Endothelial cell of umbilical vein (primary cell): ENCODE measurements at regions of chr12 and their contacts with region 1.

Region 1: DNA sequence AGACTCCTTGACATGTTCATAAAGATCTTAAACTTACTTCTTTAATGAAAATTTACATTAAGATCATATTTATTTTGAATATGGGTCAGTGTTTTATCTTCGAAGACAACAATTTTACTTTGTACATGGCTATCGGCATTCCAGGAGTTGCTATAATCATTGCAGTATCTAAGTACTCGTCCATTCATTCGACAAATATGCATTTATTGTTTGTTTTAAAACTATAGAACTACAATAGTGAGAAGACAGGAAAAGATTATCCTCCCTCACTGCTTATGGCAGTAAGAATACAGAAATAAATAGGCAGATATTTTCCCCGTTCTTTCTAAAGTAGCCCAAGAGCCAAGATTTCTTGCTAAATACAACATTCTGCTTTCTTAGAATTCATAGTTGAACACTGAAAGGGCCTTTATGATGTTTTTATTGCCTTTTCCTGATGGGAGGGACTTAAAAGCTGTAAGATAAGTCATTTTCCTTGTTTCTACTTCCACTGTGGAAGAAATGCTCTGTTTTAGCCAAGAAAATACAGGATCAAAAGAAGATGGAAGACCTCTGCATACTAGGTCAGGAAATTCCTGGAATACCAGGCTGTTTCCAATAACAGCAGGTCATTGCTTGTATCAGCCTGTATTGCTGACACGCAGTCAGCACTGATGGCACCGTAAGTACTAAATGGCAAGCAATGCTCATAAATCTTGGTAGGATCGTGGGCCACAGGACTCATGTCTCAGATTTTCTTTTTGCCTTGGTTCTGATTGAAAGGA is 521.0 kb upstream of the ATP2B1 start:
- DNase-seq: peak; percentile 92
- H3K4me3 ChIP-seq: peak overlapping the region in 1 of 3 experiments; percentile 38
- H3K27ac ChIP-seq: peak overlapping the region; percentile 66
- H3K4me1 ChIP-seq: peaks cover 25% of the 10 kb centered on the region
- H3K27me3 ChIP-seq: no peaks in the 10 kb centered on the region
- CTCF ChIP-seq: no peak
- POLR2A ChIP-seq: no peak

Region 2: GRCh38 chr12:90211017-90211416 is 18.6 kb before region 1 on chr12:
- CTCF ChIA-PET with region 1: interaction called, 6 read pairs
- POLR2A ChIA-PET with region 1: no interaction called
- dilution Hi-C with region 1: no loop called
- intact Hi-C with region 1: loop called (anchors 1 kb)
- DNase-seq: peak; percentile 96
- H3K4me3 ChIP-seq: no peak overlapping the region
- H3K27ac ChIP-seq: peak overlapping the region; percentile 85
- H3K4me1 ChIP-seq: peaks cover 16% of the 10 kb centered on the region
- H3K27me3 ChIP-seq: no peaks in the 10 kb centered on the region
- CTCF ChIP-seq: no peak
- POLR2A ChIP-seq: peak; percentile 62

Region 3: GRCh38 chr12:90244232-90244631 is 14.6 kb after region 1 on chr12:
- CTCF ChIA-PET with region 1: interaction called, 4 read pairs
- POLR2A ChIA-PET with region 1: no interaction called
- dilution Hi-C with region 1: no loop called
- intact Hi-C with region 1: loop called (anchors 1 kb)
- DNase-seq: peak; percentile 71
- H3K4me3 ChIP-seq: no peak overlapping the region
- H3K27ac ChIP-seq: no peak overlapping the region
- H3K4me1 ChIP-seq: peaks cover 16% of the 10 kb centered on the region
- H3K27me3 ChIP-seq: no peaks in the 10 kb centered on the region
- CTCF ChIP-seq: no peak
- POLR2A ChIP-seq: no peak